K562 (cell line): ENCODE measurements at regions of chr11 and their contacts with region 1.

Region 1: DNA sequence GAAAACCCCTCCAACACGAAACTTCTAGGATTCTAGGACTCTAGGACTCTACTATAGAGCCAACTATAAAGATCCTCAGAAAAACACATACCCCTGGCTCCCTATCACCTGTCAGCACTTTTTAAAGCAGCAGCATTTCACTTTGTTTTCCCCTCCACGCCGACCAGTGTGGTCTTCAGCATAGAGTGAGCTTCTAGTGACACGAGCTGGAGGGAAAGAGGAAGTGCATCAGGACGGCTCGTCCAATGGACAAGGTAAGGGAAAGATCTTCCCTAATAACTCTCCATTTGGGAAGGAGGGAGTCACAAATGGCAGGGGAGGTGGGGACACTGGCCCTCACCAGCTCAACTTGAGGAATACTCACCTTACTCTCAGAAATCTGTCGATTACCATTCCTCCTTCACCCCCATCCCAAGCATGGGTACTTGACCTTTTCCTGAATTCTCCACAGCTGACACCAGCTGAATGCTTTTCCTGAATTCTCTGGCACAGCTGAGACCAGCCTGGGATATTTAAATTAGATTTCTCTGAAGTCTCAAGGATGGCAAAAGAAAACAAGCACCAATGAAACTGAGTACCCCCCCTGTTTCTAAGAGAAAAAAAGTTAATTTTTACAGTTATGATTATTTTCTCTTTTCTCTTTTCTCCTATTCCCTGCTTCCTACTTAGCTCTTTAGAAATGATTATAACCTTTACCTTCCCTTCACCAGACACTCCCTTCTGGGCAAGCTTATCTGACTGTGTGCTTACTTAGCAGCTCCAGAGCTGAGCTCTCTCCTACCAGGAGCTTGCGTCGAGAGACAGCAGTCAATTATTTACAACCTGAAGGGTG is 33.3 kb upstream of the NNMT start:
- DNase-seq: peak; percentile 54 to 68 (median 58)
- ATAC-seq: peak; percentile 83
- H3K4me3 ChIP-seq: no peak overlapping the region
- H3K27ac ChIP-seq: no peak overlapping the region
- H3K4me1 ChIP-seq: peaks cover 12 to 16% of the 10 kb centered on the region in 2 experiments; a peak in 4 of 5 replicates
- H3K27me3 ChIP-seq: peaks cover 0 to 3% of the 10 kb centered on the region in 2 experiments; a peak in 3 of 5 replicates
- CTCF ChIP-seq: peak; percentile 75 to 85 (median 84)
- EP300 ChIP-seq: no peak
- POLR2A ChIP-seq: no peak
- RAD21 ChIP-seq: peak; percentile 89 to 92

Region 2: GRCh38 chr11:113314389-113315301 is 948.3 kb before region 1 on chr11 and contains the start of gene TTC12:
- CTCF ChIA-PET with region 1: no interaction called
- POLR2A ChIA-PET with region 1: no interaction called
- in situ Hi-C with region 1: loop called (anchors 25 kb)
- intact Hi-C with region 1: loop called (anchors 5 kb)
- DNase-seq: peak; percentile 94 to 98 (median 96)
- ATAC-seq: peak; percentile 100
- H3K4me3 ChIP-seq: peak within 1 kb of the TSS; percentile 83
- H3K27ac ChIP-seq: peak within 1 kb of the TSS; percentile 47
- H3K4me1 ChIP-seq: peaks cover 5 to 8% of the 10 kb centered on the region in 2 experiments; a peak in 4 of 5 replicates
- H3K27me3 ChIP-seq: no peaks in the 10 kb centered on the region
- CTCF ChIP-seq: no peak
- EP300 ChIP-seq: no peak
- POLR2A ChIP-seq: peak; percentile 72
- RAD21 ChIP-seq: no peak
- polyA plus RNA-seq, gene TTC12: 5.1 to 9.1 TPM

Region 3: GRCh38 chr11:113806406-113806805 is 456.5 kb before region 1 on chr11:
- CTCF ChIA-PET with region 1: interaction called, 3 read pairs
- POLR2A ChIA-PET with region 1: no interaction called
- in situ Hi-C with region 1: no loop called
- intact Hi-C with region 1: loop called (anchors 1 kb)
- DNase-seq: peak; percentile 22 to 51 (median 34)
- ATAC-seq: peak; percentile 96
- H3K4me3 ChIP-seq: no peak overlapping the region
- H3K27ac ChIP-seq: no peak overlapping the region
- H3K4me1 ChIP-seq: no peaks in the 10 kb centered on the region
- H3K27me3 ChIP-seq: no peaks in the 10 kb centered on the region
- CTCF ChIP-seq: peak; percentile 53 to 69 (median 64)
- EP300 ChIP-seq: no peak
- POLR2A ChIP-seq: no peak
- RAD21 ChIP-seq: peak; percentile 29 to 60

Region 4: DNA sequence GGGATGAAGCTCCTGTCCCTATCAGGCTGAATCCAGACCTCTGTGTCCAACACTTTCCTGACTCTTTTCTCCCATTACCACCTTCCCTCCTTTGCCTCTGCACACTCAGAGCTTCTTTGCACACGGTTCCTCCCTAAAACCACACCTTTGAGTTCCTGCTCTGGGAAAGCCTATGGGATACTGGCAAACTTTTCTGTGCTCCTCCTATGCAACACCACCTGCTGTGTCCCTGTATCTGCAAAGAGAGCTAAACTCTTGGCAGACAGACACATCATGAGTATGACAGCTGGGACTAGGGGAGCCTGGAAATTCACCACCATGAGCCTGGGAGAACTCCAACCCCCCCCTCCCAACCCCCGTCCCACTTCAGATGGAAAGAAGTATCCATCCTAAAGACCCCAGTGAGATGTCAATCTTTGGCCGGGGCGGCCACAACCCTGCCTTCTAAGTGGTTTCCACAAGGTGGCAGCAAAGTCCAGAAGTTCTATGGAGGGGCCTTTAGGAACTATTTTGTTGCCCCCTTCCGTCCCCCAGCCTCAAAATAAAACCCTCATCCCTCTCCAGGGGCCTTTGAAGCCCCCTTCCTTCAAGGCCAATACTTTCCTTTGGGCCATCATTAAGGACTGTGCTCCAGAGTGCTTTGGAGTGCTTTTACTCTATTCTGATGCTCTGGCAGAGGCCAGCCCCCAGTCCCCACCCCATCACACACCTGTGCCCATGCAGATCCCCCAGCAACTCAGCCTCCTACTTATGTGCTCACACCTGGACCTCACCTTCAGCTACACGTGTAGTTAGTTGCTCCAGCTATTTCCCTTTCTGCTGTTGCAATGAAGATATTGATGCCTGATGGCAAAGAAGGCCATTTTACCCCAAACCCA is 268.6 kb before region 1 on chr11:
- CTCF ChIA-PET with region 1: interaction called, 10 read pairs
- POLR2A ChIA-PET with region 1: no interaction called
- in situ Hi-C with region 1: no loop called
- intact Hi-C with region 1: loop called (anchors 1 kb)
- DNase-seq: peak; percentile 40 to 65 (median 50)
- ATAC-seq: peak; percentile 80
- H3K4me3 ChIP-seq: no peak overlapping the region
- H3K27ac ChIP-seq: no peak overlapping the region
- H3K4me1 ChIP-seq: no peaks in the 10 kb centered on the region
- H3K27me3 ChIP-seq: peaks cover 0 to 16% of the 10 kb centered on the region in 2 experiments; a peak in 2 of 5 replicates
- CTCF ChIP-seq: peak; percentile 70 to 77 (median 74)
- EP300 ChIP-seq: no peak
- POLR2A ChIP-seq: no peak
- RAD21 ChIP-seq: peak; percentile 82 to 89

Region 5: DNA sequence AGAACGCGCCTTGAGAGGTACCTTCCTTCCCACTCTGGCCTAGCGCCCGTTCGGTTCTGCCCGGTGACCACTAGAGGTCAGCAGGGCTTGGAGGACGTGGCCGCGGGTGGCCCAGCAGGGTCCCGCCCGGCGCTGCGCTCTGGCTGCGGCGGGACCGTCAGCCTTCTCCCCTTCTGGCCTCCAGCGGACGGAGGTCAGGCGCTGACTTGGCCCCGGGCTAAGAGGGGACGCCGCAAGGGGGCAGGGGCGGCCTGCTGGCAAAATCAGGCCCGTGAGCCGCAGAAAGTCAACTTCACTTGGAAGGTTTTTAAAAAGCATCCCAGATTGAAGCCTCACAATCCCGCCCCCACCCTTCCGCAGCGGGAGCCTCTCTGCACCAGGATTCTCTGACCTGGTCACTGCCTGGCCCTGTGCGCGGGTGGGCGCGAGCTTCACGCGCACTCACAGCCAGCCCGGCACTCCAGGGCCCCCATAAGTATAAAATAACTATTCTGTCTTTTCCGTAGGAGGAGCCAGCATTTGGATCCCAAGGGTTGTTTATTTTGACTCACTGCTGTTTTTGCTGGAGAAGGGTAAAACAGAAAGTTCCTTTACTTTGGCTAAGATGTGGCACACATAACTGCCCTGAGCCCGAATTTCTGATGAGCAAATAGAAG is 226.6 kb before region 1 on chr11:
- CTCF ChIA-PET with region 1: interaction called, 16 read pairs
- POLR2A ChIA-PET with region 1: no interaction called
- in situ Hi-C with region 1: no loop called
- intact Hi-C with region 1: loop called (anchors 1 kb)
- DNase-seq: peak; percentile 71 to 80 (median 76)
- ATAC-seq: peak; percentile 100
- H3K4me3 ChIP-seq: no peak overlapping the region
- H3K27ac ChIP-seq: no peak overlapping the region
- H3K4me1 ChIP-seq: peaks cover 0 to 6% of the 10 kb centered on the region in 2 experiments; a peak in 1 of 5 replicates
- H3K27me3 ChIP-seq: peaks cover 12 to 47% of the 10 kb centered on the region in 2 experiments
- CTCF ChIP-seq: peak; percentile 83 to 97 (median 88)
- EP300 ChIP-seq: no peak
- POLR2A ChIP-seq: no peak
- RAD21 ChIP-seq: peak; percentile 88 to 90

Region 6: GRCh38 chr11:114496915-114497314 is 234.0 kb after region 1 on chr11:
- CTCF ChIA-PET with region 1: no interaction called
- POLR2A ChIA-PET with region 1: no interaction called
- in situ Hi-C with region 1: no loop called
- intact Hi-C with region 1: no loop called
- DNase-seq: peak in 1 of 4 experiments; percentile 17
- ATAC-seq: peak; percentile 79
- H3K4me3 ChIP-seq: no peak overlapping the region
- H3K27ac ChIP-seq: no peak overlapping the region
- H3K4me1 ChIP-seq: no peaks in the 10 kb centered on the region
- H3K27me3 ChIP-seq: no peaks in the 10 kb centered on the region
- CTCF ChIP-seq: peak in 2 of 3 experiments; percentile 19 to 31; a peak in 3 of 6 replicates
- EP300 ChIP-seq: no peak
- POLR2A ChIP-seq: no peak
- RAD21 ChIP-seq: peak in 1 of 2 experiments; percentile 35; a peak in 2 of 4 replicates